ENCODE measurements at regions of chr3 and their contacts with region 1.

Region 1: DNA sequence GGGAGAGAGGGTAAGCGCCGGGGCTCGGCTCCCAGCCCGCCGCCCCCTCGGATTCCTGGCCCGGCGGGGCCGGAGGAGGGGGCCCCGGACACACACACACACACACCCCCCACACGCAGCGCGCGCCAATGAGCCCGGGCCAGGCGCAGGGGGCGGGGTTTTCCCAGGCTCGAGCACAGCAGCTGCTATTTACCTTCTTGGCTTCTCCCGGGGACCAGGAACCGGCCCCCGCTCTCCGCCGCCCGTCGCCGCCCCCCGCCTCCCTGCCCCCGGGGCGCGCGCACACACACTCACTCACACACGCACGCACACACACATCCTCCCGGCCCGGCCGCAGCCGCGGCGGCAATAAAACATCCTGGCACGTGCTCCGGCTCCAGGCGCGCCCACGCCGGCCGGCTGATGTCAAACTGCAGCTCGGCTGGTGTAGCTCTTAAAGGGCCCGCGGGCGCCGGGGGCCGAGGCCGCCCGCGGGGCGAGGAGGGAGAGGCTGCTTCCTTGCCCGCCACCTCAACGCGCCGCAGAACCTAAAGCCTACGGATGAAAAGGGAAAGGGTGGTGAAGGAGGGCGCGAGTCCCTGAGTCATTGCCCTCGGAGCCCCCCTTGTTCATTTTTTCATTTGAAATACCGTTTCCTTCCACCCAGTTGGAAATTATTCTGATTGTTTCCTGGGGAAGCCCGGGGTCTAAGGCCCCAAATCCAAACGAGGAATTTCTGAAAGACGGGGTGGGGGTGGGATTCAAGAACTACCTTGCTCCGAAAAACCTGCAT is 1.0 kb upstream of the HES1 start:
- DNase-seq: peak; percentile 97
- H3K4me3 ChIP-seq: peak overlapping the region; percentile 93
- H3K27ac ChIP-seq: peak overlapping the region; percentile 98
- H3K4me1 ChIP-seq: peaks cover 29% of the 10 kb centered on the region
- H3K27me3 ChIP-seq: no peaks in the 10 kb centered on the region
- CTCF ChIP-seq: no peak

Region 2: DNA sequence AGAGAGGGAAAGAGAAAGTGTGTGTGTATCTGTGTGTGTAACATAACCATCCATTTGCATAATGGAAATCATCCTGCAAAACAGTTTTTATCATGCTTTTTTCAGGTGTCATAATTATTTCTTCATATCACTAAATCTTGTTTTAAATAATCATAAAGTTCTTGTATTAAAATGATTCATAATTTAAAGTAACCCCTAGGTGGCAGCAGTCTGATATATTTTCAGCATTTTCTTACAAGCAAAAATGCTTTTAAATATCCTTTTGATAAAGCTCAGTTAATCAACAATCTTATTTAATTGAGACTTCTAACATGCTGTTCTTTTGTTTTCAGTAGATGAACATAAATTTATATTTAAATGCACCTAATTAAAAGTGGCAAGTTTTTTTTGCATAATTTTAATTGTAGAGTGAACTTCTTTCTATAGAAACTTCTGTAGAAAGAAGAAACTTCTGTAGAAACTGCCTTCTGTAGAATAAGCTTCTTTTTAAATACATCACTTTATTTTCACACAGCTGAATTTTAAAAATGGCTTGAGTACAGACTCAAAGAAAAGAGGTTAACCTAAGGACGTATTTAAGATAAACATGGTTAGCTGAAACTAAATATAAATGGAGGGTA is 469.5 kb before region 1 on chr3:
- CTCF ChIA-PET with region 1: interaction called, 7 read pairs
- POLR2A ChIA-PET with region 1: interaction called, 3 read pairs
- intact Hi-C with region 1: loop called (anchors 2 kb)
- DNase-seq: peak; percentile 60
- H3K4me3 ChIP-seq: no peak overlapping the region
- H3K27ac ChIP-seq: peak overlapping the region; percentile 44
- H3K4me1 ChIP-seq: peaks cover 37% of the 10 kb centered on the region
- H3K27me3 ChIP-seq: no peaks in the 10 kb centered on the region
- CTCF ChIP-seq: peak; percentile 60

Region 3: GRCh38 chr3:193894121-193894863 is 240.7 kb before region 1 on chr3:
- CTCF ChIA-PET with region 1: interaction called, 10 read pairs
- POLR2A ChIA-PET with region 1: interaction called, 6 read pairs
- intact Hi-C with region 1: loop called (anchors 1 kb)
- DNase-seq: peak; percentile 92
- H3K4me3 ChIP-seq: no peak overlapping the region
- H3K27ac ChIP-seq: peak overlapping the region; percentile 100
- H3K4me1 ChIP-seq: peaks cover 55% of the 10 kb centered on the region
- H3K27me3 ChIP-seq: no peaks in the 10 kb centered on the region
- CTCF ChIP-seq: no peak

Region 4: GRCh38 chr3:194003125-194004057 is 131.6 kb before region 1 on chr3:
- CTCF ChIA-PET with region 1: no interaction called
- POLR2A ChIA-PET with region 1: interaction called, 3 read pairs
- intact Hi-C with region 1: loop called (anchors 2 kb)
- DNase-seq: peak; percentile 91
- H3K4me3 ChIP-seq: peak overlapping the region; percentile 46
- H3K27ac ChIP-seq: peak overlapping the region; percentile 80
- H3K4me1 ChIP-seq: peaks cover 54% of the 10 kb centered on the region
- H3K27me3 ChIP-seq: no peaks in the 10 kb centered on the region
- CTCF ChIP-seq: no peak

Region 5: DNA sequence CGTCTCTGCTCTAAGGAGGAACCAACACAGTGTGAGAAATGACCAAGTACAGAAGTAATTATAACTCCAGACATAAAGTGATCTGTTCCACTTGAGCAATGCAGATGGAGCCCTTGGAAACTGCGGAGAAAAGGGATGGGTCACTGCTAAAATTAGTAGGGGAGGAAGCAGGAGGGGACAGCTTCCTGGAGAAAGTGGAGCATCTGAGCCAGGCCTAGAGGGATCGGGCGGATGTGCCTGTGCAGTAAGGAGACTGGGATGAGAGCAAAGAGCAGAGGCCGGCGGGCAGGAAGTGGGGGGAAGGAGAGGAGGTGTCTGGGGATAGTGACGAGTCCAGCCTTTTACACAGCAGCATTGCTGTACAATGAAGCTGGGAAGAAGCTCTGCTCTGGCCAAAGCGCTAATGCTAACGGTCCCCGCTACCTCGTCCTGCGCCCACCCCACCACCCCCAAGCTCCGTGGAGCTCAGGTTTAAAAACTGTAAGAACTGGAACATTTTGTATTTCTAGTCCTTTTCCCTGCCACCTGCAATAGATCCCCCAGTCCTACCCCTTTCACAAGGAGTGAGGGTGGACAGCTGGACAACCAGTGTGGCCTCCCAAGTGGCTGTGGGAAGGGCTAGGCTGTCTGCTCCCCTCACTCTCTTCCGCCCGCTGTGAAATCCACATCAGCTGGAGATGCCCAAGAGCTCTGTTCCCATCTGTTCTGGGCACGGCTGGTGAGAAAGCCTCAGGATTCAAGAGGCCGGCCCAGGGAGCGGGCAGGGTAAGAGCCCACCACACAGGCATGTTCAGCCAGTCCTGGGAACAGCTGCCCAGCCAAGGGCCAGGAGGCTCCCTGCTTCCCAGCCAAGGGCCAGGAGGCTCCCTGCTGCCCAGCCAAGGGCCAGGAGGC is 52.0 kb before region 1 on chr3:
- CTCF ChIA-PET with region 1: no interaction called
- POLR2A ChIA-PET with region 1: interaction called, 18 read pairs
- intact Hi-C with region 1: no loop called
- DNase-seq: no peak
- H3K4me3 ChIP-seq: no peak overlapping the region
- H3K27ac ChIP-seq: peak overlapping the region; percentile 48
- H3K4me1 ChIP-seq: peaks cover 50% of the 10 kb centered on the region
- H3K27me3 ChIP-seq: no peaks in the 10 kb centered on the region
- CTCF ChIP-seq: no peak

Region 6: DNA sequence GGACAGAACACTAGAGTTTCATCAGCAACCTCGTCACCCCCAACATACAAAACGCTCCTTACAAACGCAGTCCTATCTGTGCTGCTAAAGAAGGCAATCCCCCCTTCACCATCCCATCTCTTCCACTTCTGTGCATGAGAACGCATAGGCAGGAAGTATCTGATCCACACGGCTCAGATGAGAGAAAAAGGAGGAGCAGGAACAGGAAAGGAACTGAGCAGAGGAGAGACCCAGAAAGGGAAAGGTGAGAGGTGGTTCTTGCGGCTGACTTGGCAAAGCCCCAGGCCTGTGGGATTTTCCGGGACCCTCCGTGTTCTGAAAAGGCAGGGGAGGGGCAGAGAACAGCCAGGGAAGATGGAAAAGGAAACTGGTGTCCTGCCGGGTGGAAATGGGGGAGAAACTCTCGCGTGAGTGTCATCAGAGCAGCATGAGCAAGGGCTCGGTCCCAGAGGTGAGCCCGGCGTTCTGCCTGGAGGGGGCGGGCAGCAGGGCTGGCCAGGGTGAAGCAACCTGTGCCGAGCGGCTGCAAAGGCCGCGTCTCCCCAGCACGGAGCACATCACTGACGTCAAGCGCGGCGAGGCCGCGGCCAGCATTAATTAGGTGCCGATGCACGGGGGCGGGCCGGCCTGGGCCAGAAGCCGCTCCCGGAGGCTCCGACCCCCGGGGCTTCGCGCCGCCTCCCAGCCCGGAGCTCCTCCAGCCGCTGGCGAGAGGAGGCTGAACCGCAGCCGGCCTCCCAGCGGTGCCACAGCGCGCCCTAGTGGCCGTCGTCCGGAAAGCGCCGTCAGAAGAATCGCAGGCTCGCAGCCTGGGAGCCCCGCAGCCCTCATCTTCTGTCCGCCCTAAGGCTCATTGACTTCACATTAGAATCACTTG is 180.4 kb after region 1 on chr3:
- CTCF ChIA-PET with region 1: interaction called, 19 read pairs
- POLR2A ChIA-PET with region 1: interaction called, 6 read pairs
- intact Hi-C with region 1: loop called (anchors 1 kb)
- DNase-seq: peak; percentile 94
- H3K4me3 ChIP-seq: peak overlapping the region; percentile 48
- H3K27ac ChIP-seq: peak overlapping the region; percentile 87
- H3K4me1 ChIP-seq: peaks cover 37% of the 10 kb centered on the region
- H3K27me3 ChIP-seq: no peaks in the 10 kb centered on the region
- CTCF ChIP-seq: peak; percentile 92

Measured in A673 (cell line).